Activated CD4-positive, alpha-beta memory T cell treated with anti-CD3 and anti-CD28 coated beads for 36 hours (primary cell): ENCODE measurements at regions of chr13 and their contacts with region 1.

Region 1: DNA sequence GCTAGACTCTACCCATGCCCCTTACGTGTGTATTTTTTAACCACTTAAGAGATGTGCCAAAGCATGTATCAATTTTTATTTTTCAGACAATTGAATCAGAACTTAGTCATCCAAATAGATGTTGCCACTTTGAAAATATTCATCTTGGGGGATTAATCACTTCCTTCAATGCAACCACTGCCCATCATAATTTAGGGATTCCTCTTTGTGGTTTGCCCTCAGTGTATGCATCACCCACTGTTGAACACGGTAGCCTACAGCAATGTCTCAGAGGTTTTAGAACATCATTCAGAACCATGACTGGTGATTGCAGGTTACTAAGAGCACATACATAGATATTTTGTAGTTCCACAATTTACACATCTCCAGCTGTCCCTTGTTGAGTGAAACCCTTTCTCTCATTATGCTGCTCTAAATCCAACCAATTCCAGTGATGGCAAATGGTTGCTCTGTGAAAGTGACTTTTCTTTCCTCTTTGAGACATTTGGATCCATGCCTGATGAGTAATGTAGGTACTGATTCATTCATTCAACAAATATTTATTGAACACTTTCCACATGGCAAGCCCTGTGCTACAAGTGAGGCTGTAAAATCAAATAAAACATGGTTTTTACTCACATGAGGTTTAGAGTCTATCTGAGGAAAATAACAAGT is 60.6 kb upstream of the SERP2 start:
- DNase-seq: peak; percentile 35
- H3K4me3 Mint-ChIP-seq: no peak overlapping the region
- H3K27ac Mint-ChIP-seq: no peak overlapping the region
- H3K4me1 Mint-ChIP-seq: peaks cover 11% of the 10 kb centered on the region
- H3K27me3 Mint-ChIP-seq: peaks cover 38% of the 10 kb centered on the region

Region 2: GRCh38 chr13:44197791-44198770 is 114.9 kb before region 1 on chr13:
- CTCF ChIA-PET with region 1: no interaction called
- POLR2A ChIA-PET with region 1: no interaction called
- intact Hi-C with region 1: loop called (anchors 1 kb)
- DNase-seq: peak; percentile 60
- H3K4me3 Mint-ChIP-seq: no peak overlapping the region
- H3K27ac Mint-ChIP-seq: no peak overlapping the region
- H3K4me1 Mint-ChIP-seq: peaks cover 34% of the 10 kb centered on the region
- H3K27me3 Mint-ChIP-seq: peaks cover 16% of the 10 kb centered on the region

Region 3: GRCh38 chr13:44274452-44275205 is 38.4 kb before region 1 on chr13:
- CTCF ChIA-PET with region 1: no interaction called
- POLR2A ChIA-PET with region 1: no interaction called
- intact Hi-C with region 1: loop called (anchors 5 kb)
- DNase-seq: peak; percentile 19
- H3K4me3 Mint-ChIP-seq: peak overlapping the region; percentile 63
- H3K27ac Mint-ChIP-seq: peak overlapping the region; percentile 82
- H3K4me1 Mint-ChIP-seq: peaks cover 30% of the 10 kb centered on the region
- H3K27me3 Mint-ChIP-seq: peaks cover 3% of the 10 kb centered on the region

Region 4: GRCh38 chr13:44331912-44332851 is 19.2 kb after region 1 on chr13:
- CTCF ChIA-PET with region 1: no interaction called
- POLR2A ChIA-PET with region 1: no interaction called
- intact Hi-C with region 1: loop called (anchors 1 kb)
- DNase-seq: no peak
- H3K4me3 Mint-ChIP-seq: no peak overlapping the region
- H3K27ac Mint-ChIP-seq: no peak overlapping the region
- H3K4me1 Mint-ChIP-seq: peaks cover 12% of the 10 kb centered on the region
- H3K27me3 Mint-ChIP-seq: peaks cover 12% of the 10 kb centered on the region

Region 5: GRCh38 chr13:45015300-45015699 is 702.3 kb after region 1 on chr13:
- CTCF ChIA-PET with region 1: no interaction called
- POLR2A ChIA-PET with region 1: no interaction called
- intact Hi-C with region 1: no loop called
- DNase-seq: no peak
- H3K4me3 Mint-ChIP-seq: no peak overlapping the region
- H3K27ac Mint-ChIP-seq: no peak overlapping the region
- H3K4me1 Mint-ChIP-seq: peaks cover 11% of the 10 kb centered on the region
- H3K27me3 Mint-ChIP-seq: no peaks in the 10 kb centered on the region

Region 6: DNA sequence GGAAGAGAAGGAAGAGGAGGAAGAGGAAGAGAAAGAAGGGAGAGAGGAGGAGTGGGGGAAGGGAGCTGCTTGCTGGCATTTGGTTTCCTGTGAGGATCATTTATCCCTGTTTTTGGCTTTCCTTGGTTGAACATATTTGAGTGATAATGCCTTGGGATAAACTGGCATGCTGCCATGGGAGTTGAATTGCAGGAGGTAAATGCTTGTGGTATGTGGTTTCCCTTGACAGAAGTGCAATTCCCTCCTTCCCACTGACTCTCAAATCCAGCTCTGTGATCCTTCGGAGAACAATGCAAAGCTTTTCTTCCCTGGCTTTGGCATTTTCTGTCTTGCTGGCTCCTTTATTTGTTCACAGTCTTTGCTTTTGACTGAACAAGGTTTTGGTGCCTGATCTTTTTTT is 1361.9 kb after region 1 on chr13:
- CTCF ChIA-PET with region 1: no interaction called
- POLR2A ChIA-PET with region 1: no interaction called
- intact Hi-C with region 1: no loop called
- DNase-seq: no peak
- H3K4me3 Mint-ChIP-seq: no peak overlapping the region
- H3K27ac Mint-ChIP-seq: no peak overlapping the region
- H3K4me1 Mint-ChIP-seq: peaks cover 5% of the 10 kb centered on the region
- H3K27me3 Mint-ChIP-seq: peaks cover 2% of the 10 kb centered on the region